Mammary epithelial cell (primary cell): ENCODE measurements at regions of chr7 and their contacts with region 1.

Region 1: DNA sequence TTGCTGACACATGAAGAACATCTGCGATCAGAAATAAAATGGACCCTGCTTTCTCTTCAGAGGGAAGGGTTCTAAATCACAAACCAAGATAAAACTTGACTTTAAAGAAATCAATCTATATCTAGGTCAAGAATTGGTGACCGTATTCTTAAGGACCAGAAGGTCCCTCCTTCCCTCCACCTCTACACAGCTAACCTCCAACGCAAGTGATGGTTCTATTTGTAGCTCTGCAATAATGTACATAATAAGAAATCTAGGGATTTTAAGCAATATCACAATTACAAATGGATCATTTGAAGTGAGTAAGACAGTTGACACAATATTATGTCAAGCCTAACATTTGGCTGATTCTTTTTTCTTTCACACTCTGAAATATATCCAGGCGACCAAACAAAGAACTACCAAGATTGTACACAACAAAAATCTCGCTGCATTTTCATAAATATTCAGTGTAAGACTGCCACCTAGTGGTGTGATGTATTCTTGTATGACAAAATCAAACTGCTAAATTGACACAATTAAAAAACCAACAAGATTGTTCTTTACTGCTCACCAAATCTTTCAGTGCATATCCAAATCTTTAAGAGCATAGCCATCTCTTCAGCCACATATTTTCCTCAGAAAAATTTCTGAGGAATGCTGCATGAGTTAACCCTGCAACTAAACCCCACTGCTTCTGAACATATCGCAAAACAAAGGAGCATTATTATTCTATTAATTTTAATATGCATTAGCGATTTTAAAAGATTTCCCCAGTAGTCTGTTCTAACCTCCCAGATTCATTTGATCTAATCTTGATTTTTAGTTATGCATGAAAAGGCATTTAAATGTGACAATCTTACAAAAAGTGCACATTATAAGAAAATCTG is 44.5 kb downstream of the ICA1 start:
- DNase-seq: peak; percentile 36
- H3K4me3 ChIP-seq: no peak overlapping the region
- H3K27ac ChIP-seq: no peak overlapping the region
- H3K4me1 ChIP-seq: no peaks in the 10 kb centered on the region
- H3K27me3 ChIP-seq: no peaks in the 10 kb centered on the region
- CTCF ChIP-seq: peak; percentile 53

Region 2: GRCh38 chr7:7424151-7424873 is 793.1 kb before region 1 on chr7:
- CTCF ChIA-PET with region 1: no interaction called
- dilution Hi-C with region 1: no loop called
- in situ Hi-C with region 1: loop called in 1 of 2 experiments (anchors 10 kb)
- intact Hi-C with region 1: loop called (anchors 1 kb)
- DNase-seq: peak; percentile 51
- H3K4me3 ChIP-seq: peak overlapping the region; percentile 32 to 51 (median 45)
- H3K27ac ChIP-seq: no peak overlapping the region
- H3K4me1 ChIP-seq: no peaks in the 10 kb centered on the region
- H3K27me3 ChIP-seq: no peaks in the 10 kb centered on the region
- CTCF ChIP-seq: peak; percentile 88

Region 3: GRCh38 chr7:7505915-7506314 is 711.5 kb before region 1 on chr7:
- CTCF ChIA-PET with region 1: no interaction called
- dilution Hi-C with region 1: no loop called
- in situ Hi-C with region 1: no loop called
- intact Hi-C with region 1: no loop called
- DNase-seq: no peak
- H3K4me3 ChIP-seq: no peak overlapping the region
- H3K27ac ChIP-seq: no peak overlapping the region
- H3K4me1 ChIP-seq: no peaks in the 10 kb centered on the region
- H3K27me3 ChIP-seq: no peaks in the 10 kb centered on the region
- CTCF ChIP-seq: no peak

Region 4: DNA sequence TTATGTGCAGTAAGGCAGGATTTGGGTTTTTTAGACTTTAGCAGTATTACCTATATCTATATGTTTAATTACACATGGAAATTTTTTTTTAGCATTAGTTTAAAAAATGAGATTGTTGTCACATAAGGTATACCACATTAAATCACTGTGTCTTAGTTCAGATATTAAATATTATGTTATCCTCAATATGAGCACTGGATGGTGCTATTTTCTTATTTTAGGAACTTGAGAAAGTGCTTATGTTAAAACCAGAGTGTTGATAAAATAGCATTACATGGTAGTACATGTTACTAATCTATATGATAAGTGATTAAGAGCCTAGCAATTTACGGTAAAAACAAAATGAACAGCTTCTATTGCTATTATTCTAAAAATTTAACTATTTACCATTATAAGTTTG is 622.0 kb before region 1 on chr7:
- CTCF ChIA-PET with region 1: no interaction called
- dilution Hi-C with region 1: no loop called
- in situ Hi-C with region 1: no loop called
- intact Hi-C with region 1: loop called (anchors 2 kb)
- DNase-seq: peak; percentile 11
- H3K4me3 ChIP-seq: no peak overlapping the region
- H3K27ac ChIP-seq: no peak overlapping the region
- H3K4me1 ChIP-seq: no peaks in the 10 kb centered on the region
- H3K27me3 ChIP-seq: no peaks in the 10 kb centered on the region
- CTCF ChIP-seq: peak; percentile 10 to 35

Region 5: GRCh38 chr7:7681179-7681935 is 536.1 kb before region 1 on chr7:
- CTCF ChIA-PET with region 1: no interaction called
- dilution Hi-C with region 1: no loop called
- in situ Hi-C with region 1: no loop called
- intact Hi-C with region 1: loop called (anchors 1 kb)
- DNase-seq: peak; percentile 66
- H3K4me3 ChIP-seq: no peak overlapping the region
- H3K27ac ChIP-seq: no peak overlapping the region
- H3K4me1 ChIP-seq: peaks cover 5% of the 10 kb centered on the region
- H3K27me3 ChIP-seq: no peaks in the 10 kb centered on the region
- CTCF ChIP-seq: peak; percentile 60 to 61

Region 6: GRCh38 chr7:8042796-8043535 is 174.5 kb before region 1 on chr7:
- CTCF ChIA-PET with region 1: no interaction called
- dilution Hi-C with region 1: no loop called
- in situ Hi-C with region 1: no loop called
- intact Hi-C with region 1: loop called (anchors 10 kb)
- DNase-seq: no peak
- H3K4me3 ChIP-seq: no peak overlapping the region
- H3K27ac ChIP-seq: no peak overlapping the region
- H3K4me1 ChIP-seq: no peaks in the 10 kb centered on the region
- H3K27me3 ChIP-seq: no peaks in the 10 kb centered on the region
- CTCF ChIP-seq: no peak

Region 7: DNA sequence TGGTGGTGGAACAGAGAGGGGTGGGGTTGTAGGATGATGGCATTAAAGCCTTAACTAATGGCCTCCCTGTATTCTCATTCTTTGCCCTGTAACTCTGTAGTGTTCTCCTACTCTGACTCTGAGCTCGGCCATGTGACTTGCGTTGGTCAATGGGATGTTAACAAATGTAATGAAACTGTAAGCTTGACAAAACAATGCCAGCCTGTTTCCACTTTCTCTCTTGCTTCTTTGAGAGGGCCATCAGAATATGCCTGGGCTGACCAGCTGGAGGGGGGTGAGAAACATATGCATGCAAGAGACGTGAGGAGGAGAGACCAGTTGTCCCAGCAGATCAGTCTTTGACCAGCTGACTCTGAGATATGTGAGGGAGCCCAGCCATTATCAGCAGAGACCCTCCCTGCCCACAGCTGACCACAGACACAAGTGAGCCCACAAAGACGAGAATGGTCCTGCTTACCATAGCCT is 56.0 kb before region 1 on chr7:
- CTCF ChIA-PET with region 1: no interaction called
- dilution Hi-C with region 1: no loop called
- in situ Hi-C with region 1: no loop called
- intact Hi-C with region 1: no loop called
- DNase-seq: no peak
- H3K4me3 ChIP-seq: no peak overlapping the region
- H3K27ac ChIP-seq: no peak overlapping the region
- H3K4me1 ChIP-seq: no peaks in the 10 kb centered on the region
- H3K27me3 ChIP-seq: no peaks in the 10 kb centered on the region
- CTCF ChIP-seq: no peak

Region 8: GRCh38 chr7:8490391-8491045 is 273.1 kb after region 1 on chr7:
- CTCF ChIA-PET with region 1: no interaction called
- dilution Hi-C with region 1: no loop called
- in situ Hi-C with region 1: no loop called
- intact Hi-C with region 1: no loop called
- DNase-seq: no peak
- H3K4me3 ChIP-seq: no peak overlapping the region
- H3K27ac ChIP-seq: no peak overlapping the region
- H3K4me1 ChIP-seq: no peaks in the 10 kb centered on the region
- H3K27me3 ChIP-seq: no peaks in the 10 kb centered on the region
- CTCF ChIP-seq: no peak